Left colon (tissue), 2 donors: ENCODE measurements at regions of chr10 and their contacts with region 1.

Region 1: GRCh38 chr10:23994479-23995046 is 214.4 kb upstream of the KIAA1217 start:
- DNase-seq: peak; percentile 34 to 77
- ATAC-seq: peak; percentile 81

Region 2: GRCh38 chr10:23291551-23292334 is 702.8 kb before region 1 on chr10:
- intact Hi-C with region 1: no loop called
- DNase-seq: no peak
- ATAC-seq: no peak

Region 3: GRCh38 chr10:24197263-24197662 is 202.7 kb after region 1 on chr10:
- intact Hi-C with region 1: loop called in 1 of 2 experiments (anchors 2 kb)
- DNase-seq: no peak
- ATAC-seq: no peak

Region 4: DNA sequence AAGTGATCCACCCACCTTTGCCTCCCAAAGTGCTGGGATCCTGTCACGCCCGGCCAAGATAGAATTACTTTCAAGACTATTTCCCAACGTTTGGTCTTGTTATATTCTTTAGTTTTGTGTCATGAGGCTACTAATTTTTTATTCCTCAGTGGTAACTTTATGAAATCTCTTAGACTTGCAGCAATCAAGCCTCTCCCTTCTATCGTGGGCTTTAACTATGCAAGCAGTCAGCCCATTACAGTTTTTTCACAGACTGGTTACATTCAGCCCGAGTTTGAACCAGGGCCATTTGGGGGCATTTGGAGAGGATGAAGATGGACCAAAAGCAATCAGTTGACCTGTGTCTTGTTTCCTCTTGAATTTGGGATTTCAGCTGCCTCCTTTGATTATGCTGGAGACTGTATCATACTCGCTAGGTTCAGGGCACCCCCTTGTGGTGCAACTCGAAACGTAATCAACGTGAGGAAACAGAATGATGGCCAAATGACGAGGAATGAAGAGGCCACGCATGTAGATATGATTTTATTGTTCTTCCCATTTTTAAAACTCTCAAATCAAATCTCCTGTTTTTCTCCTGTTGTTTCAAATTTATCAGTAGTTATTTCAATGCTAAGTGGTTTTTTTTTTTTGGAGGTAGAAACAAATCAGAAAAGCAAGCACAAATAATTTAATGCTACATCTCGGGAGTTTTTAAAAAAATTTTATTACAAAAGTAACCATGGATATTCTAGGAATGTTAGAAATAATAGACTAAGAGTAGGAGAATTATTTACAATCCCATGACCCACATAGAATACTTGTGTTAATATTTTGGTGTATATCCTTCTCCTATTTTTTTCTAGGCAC is 365.9 kb after region 1 on chr10:
- intact Hi-C with region 1: loop called in 1 of 2 experiments (anchors 10 kb)
- DNase-seq: peak; percentile 60 to 83
- ATAC-seq: peak; percentile 83

Region 5: GRCh38 chr10:24518981-24519597 is 524.5 kb after region 1 on chr10:
- intact Hi-C with region 1: loop called (anchors 5 to 10 kb)
- DNase-seq: peak in 1 of 2 donors; percentile 66
- ATAC-seq: peak; percentile 66